ENCODE measurements at regions of chr1 and their contacts with region 1.

Region 1: DNA sequence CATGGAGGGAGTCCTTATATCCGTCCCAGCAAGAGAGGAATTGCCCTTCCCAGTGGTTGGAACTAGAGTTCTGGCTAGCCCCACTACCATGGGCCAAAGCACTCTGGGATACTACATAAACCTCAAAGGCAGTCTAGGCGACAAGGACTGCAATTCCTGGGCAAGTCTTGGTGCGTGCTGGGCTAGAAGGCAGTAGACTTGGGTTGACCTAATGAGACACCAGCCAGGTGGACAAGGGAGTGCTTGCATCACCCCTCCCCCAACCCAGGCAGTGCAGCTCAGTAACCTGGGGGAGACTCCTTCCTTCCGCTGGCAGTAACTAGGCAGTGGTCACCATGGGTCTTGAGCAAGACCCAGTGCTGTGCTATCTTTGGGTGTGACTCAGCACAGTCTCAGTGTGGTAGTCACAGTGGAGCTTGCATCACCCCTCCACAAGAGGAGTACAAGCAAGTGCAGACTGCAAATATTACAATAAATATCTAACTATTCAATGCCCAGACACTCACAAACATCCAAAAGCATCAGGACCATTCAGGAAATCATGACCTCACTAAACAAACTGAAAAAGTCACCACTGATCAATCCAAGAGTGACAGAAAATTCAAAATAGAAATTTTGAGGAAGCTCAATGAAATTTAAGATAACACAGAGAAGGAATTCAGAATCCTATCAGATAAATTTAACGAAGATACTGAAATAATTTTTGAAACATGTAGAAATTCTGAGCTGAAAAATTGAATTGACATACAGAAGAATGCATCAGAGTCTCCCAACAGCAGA is 84.7 kb upstream of the LYPLAL1 start:
- DNase-seq: peak; percentile 61
- ATAC-seq: peak; percentile 93
- H3K4me3 ChIP-seq: no peak overlapping the region
- H3K27ac ChIP-seq: no peak overlapping the region
- H3K4me1 ChIP-seq: peaks cover 21% of the 10 kb centered on the region
- H3K27me3 ChIP-seq: no peaks in the 10 kb centered on the region
- CTCF ChIP-seq: no peak
- EP300 ChIP-seq: no peak
- POLR2A ChIP-seq: no peak
- RAD21 ChIP-seq: no peak

Region 2: DNA sequence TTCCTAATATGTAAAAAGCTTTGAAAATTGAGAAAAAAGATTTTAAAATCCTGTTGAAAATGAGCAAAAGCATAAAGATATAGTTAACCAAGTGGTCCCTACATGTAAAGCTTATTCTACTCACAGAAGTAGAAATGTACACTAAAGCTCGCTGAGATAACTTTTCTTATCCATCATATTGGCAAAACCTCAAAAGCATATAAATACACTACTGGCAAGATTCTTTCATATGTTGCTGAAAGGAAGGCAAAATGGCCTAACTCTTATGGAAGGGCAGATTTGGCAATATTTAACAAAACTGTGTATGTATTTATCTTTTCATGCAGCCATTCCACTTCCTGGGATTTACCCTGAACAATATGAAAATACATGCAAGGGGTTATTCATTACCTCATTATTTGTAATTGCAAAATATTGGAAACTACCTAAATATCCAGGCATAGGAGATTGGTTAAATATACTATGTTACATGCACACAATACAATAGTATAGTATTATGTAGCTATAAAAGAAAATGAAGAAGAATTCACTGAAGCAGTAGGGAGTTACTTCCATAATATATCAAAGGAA is 41.5 kb after region 1 on chr1:
- CTCF ChIA-PET with region 1: no interaction called
- POLR2A ChIA-PET with region 1: no interaction called
- RAD21 ChIA-PET with region 1: no interaction called
- SMC1A ChIA-PET with region 1: no interaction called
- in situ Hi-C with region 1: no loop called
- intact Hi-C with region 1: loop called (anchors 5 kb)
- DNase-seq: no peak
- ATAC-seq: peak; percentile 64
- H3K4me3 ChIP-seq: no peak overlapping the region
- H3K27ac ChIP-seq: no peak overlapping the region
- H3K4me1 ChIP-seq: no peaks in the 10 kb centered on the region
- H3K27me3 ChIP-seq: no peaks in the 10 kb centered on the region
- CTCF ChIP-seq: no peak
- EP300 ChIP-seq: no peak
- POLR2A ChIP-seq: no peak
- RAD21 ChIP-seq: no peak